Activated T-helper 1 cell treated with anti-CD3 and anti-CD28 coated beads, Interleukin-12 subunit alpha, Interleukin-12 subunit beta, Interleukin-2, Interleukin-4 antibody, amounts not matched to agents 30 ng/mL and 10 ng/mL and 1 ng/mL, durations not matched to agents 14 hours and 24 hours and 36 hours (primary cell): ENCODE measurements at regions of chr7 and their contacts with region 1.

Region 1: GRCh38 chr7:66768865-66769832 is 28.6 kb downstream of the RABGEF1 start:
- DNase-seq: no peak
- H3K4me3 Mint-ChIP-seq: no peak overlapping the region
- H3K27ac Mint-ChIP-seq: peak overlapping the region; percentile 76
- H3K4me1 Mint-ChIP-seq: peaks cover 24% of the 10 kb centered on the region
- H3K27me3 Mint-ChIP-seq: no peaks in the 10 kb centered on the region

Region 2: GRCh38 chr7:66758950-66759628 is 10.1 kb before region 1 on chr7:
- intact Hi-C with region 1: loop called (anchors 1 kb)
- DNase-seq: no peak
- H3K4me3 Mint-ChIP-seq: peak overlapping the region; percentile 4
- H3K27ac Mint-ChIP-seq: peak overlapping the region; percentile 73
- H3K4me1 Mint-ChIP-seq: peaks cover 33% of the 10 kb centered on the region
- H3K27me3 Mint-ChIP-seq: no peaks in the 10 kb centered on the region

Region 3: DNA sequence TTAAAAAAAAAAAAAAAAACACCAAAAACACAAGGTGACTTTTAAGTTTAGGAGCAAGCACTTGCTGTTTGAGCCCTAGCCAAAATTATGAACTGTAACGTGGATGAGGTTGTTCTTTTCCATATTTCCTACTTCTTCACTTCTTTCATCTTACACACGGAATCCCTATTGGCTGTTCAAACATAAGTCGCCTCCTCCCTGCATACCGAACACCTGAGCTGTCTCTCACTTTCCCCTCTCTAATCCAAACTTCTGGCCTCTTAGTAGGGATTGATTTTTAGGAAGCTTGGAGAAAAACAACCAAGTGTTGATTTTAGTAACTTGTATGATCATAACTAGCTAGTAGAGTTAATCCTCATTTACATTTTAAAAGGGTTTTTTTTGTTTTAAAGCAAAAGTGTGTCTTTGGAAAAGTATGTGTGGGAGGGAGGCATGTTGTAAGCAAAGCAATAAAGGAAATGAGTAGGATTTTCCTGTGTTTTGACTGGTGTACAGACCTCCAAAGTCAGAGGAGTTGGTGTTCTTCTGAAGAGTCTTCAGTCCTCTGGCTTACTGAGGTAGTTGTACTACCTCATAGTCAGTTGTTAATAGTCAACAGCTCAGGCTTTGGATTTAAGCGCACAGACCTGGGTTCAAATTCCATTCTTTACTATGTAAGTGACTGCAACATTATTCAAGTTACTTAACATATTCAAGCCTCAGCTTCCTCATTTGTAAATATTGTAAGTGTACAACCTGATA is 10.7 kb after region 1 on chr7:
- intact Hi-C with region 1: loop called (anchors 1 kb)
- DNase-seq: no peak
- H3K4me3 Mint-ChIP-seq: no peak overlapping the region
- H3K27ac Mint-ChIP-seq: peak overlapping the region; percentile 52
- H3K4me1 Mint-ChIP-seq: peaks cover 10% of the 10 kb centered on the region
- H3K27me3 Mint-ChIP-seq: no peaks in the 10 kb centered on the region

Region 4: GRCh38 chr7:67033251-67033650 is 264.1 kb after region 1 on chr7:
- intact Hi-C with region 1: no loop called
- DNase-seq: no peak
- H3K4me3 Mint-ChIP-seq: no peak overlapping the region
- H3K27ac Mint-ChIP-seq: no peak overlapping the region
- H3K4me1 Mint-ChIP-seq: no peaks in the 10 kb centered on the region
- H3K27me3 Mint-ChIP-seq: no peaks in the 10 kb centered on the region